GM10248 (cell line): ENCODE measurements at regions of chr3 and their contacts with region 1.

Region 1: DNA sequence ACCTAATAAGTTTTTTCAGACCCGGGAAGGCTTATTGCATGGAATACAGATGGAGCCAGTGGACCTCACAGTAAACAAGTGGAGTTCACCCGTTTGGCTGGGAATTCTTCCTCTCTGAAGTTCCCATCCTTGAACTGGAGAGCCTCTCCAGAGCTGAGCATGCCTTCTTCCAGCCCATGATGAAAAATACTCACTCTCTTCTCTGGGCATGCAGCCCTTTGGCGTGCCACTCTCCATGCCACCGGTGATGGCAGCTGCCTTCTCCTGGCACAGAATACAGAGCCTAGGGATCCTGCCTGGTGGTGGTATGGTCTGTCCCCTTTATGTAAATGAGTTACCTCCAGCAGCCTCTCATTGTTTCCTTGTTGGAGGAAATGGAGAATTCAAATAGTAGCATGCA is 150.8 kb downstream of the LEKR1 start:
- DNase-seq: no peak
- CTCF ChIP-seq: no peak

Region 2: GRCh38 chr3:156963096-156963495 is 13.8 kb before region 1 on chr3:
- CTCF ChIA-PET with region 1: interaction called, 28 read pairs
- POLR2A ChIA-PET with region 1: no interaction called
- DNase-seq: no peak
- CTCF ChIP-seq: no peak

Region 3: GRCh38 chr3:157159762-157160657 is 183.1 kb after region 1 on chr3 and contains the start of gene CCNL1:
- CTCF ChIA-PET with region 1: no interaction called
- POLR2A ChIA-PET with region 1: no interaction called
- DNase-seq: peak; percentile 92
- CTCF ChIP-seq: no peak